ENCODE measurements at regions of chr14 and their contacts with region 1.

Region 1: DNA sequence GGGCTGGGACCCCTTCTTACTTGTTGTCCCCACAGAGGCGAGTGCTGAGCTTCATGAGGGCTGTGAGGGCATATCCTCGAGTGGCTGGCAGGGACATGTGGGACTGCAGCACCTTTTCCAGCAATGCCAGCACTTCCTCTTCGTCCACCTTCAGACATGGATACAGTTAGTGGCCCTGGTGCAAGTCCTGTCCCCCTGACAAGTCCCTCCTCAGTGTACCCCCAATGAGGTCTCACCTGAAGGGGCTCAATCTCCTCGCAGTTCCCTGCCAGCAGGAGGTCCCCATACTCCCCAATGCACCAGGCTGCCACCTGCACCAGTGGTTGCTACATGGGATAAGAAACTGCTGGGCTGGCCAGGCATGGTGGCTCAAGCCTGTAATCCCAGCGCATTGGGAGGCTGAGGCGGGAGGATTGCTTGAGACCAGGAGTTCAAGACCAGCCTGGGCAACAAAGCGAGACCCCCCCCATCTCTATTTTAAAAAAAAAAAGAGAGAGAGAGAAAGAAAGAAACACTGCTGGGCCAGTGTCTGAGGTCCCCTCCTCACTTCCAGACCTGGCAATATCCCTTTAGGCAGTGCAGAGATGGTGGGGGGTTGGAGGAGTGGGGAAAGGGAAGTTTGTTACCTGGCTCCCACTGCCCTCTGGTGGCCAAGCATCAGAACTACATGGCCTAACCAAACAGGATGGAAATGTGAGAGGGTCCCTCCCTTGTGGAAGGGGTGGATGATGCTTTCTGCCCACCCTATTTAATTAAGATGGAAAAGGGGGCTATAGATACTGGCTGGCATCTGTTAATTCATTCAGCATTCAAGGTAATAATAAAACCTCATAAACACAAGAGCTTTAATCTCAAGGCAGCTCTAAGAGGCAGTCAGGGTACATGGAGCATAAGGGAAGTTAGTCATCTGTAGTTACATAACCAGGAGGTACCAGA is 5.1 kb downstream of the AP1G2 start:
- DNase-seq: peak; percentile 67 to 72
- H3K4me3 ChIP-seq: no peak overlapping the region
- H3K4me3 Mint-ChIP-seq: no peak overlapping the region
- H3K27ac Mint-ChIP-seq: no peak overlapping the region
- H3K4me1 ChIP-seq: no peaks in the 10 kb centered on the region
- H3K4me1 Mint-ChIP-seq: peaks cover 4% of the 10 kb centered on the region
- H3K27me3 ChIP-seq: no peaks in the 10 kb centered on the region
- H3K27me3 Mint-ChIP-seq: no peaks in the 10 kb centered on the region
- CTCF ChIP-seq: peak; percentile 89 to 91

Region 2: DNA sequence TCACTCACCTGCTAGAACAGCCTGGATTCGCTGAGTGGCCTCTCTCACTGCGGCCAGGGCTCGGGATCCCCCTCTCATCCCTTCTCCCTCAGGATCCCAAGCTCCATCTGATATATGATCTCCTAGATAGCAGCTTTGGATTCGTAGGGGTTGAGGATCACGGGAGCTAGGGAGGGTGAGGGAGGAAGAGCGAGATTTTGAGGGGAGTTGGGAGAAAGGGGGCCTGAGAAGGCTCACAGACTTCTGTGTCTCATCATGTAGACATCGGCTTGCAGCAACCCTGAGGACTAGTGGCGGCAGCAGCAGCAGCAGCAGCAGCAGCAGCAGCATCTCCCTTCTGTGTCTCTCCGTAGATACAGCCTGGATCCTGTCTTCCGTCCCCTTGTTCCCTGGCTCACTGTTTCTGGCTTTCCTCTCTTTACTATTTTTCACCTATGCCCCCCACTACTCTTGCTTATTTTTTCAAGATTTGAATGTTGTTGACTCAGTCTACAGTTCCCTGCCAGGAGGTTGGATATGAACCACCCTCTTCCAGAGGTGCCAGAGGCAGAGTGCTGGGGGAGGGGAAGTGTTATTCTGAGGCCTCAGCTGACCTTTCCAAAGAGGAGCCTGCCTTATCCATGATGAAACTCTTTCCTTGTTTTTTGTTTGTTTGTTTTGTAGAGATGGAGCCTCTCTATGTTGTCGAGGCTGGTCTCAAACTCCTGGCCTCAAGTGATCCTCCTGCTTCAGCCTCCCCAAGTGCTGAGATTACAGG is 457.8 kb before region 1 on chr14 and contains the start of gene CIROP:
- CTCF ChIA-PET with region 1: interaction called, 10 read pairs
- POLR2A ChIA-PET with region 1: no interaction called
- intact Hi-C with region 1: no loop called
- DNase-seq: no peak
- H3K4me3 ChIP-seq: no peak within 1 kb of the TSS
- H3K4me3 Mint-ChIP-seq: no peak within 1 kb of the TSS
- H3K27ac Mint-ChIP-seq: no peak within 1 kb of the TSS
- H3K4me1 ChIP-seq: peaks cover 6% of the 10 kb centered on the region; the same call in 1 of the 2 replicates
- H3K4me1 Mint-ChIP-seq: peaks cover 15% of the 10 kb centered on the region
- H3K27me3 ChIP-seq: no peaks in the 10 kb centered on the region
- H3K27me3 Mint-ChIP-seq: no peaks in the 10 kb centered on the region
- CTCF ChIP-seq: no peak
- total RNA-seq, gene CIROP: not detected in 2 replicates

Region 3: DNA sequence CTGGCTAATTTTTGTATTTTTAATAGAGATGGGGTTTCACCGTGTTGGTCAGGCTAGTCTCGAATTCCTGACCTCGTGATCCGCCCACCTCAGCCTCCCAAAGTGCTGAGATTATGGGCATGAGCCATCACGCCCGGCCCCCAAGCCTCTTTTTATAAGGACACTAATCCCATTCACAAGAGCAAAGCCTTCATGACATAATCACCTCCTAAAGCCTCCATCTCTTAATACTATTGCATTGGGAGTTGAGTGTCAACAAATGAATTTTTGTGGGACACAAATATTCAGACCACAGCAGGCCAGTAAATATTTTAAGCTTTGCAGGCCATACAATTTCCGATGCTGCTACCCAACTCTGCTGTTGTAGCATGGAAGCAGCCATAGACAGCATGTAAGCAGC is 313.9 kb before region 1 on chr14:
- CTCF ChIA-PET with region 1: interaction called, 12 read pairs
- POLR2A ChIA-PET with region 1: no interaction called
- intact Hi-C with region 1: no loop called
- DNase-seq: no peak
- H3K4me3 ChIP-seq: no peak overlapping the region
- H3K4me3 Mint-ChIP-seq: no peak overlapping the region
- H3K27ac Mint-ChIP-seq: no peak overlapping the region
- H3K4me1 ChIP-seq: peaks cover 16% of the 10 kb centered on the region
- H3K4me1 Mint-ChIP-seq: peaks cover 27% of the 10 kb centered on the region
- H3K27me3 ChIP-seq: no peaks in the 10 kb centered on the region
- H3K27me3 Mint-ChIP-seq: no peaks in the 10 kb centered on the region
- CTCF ChIP-seq: no peak

Region 4: DNA sequence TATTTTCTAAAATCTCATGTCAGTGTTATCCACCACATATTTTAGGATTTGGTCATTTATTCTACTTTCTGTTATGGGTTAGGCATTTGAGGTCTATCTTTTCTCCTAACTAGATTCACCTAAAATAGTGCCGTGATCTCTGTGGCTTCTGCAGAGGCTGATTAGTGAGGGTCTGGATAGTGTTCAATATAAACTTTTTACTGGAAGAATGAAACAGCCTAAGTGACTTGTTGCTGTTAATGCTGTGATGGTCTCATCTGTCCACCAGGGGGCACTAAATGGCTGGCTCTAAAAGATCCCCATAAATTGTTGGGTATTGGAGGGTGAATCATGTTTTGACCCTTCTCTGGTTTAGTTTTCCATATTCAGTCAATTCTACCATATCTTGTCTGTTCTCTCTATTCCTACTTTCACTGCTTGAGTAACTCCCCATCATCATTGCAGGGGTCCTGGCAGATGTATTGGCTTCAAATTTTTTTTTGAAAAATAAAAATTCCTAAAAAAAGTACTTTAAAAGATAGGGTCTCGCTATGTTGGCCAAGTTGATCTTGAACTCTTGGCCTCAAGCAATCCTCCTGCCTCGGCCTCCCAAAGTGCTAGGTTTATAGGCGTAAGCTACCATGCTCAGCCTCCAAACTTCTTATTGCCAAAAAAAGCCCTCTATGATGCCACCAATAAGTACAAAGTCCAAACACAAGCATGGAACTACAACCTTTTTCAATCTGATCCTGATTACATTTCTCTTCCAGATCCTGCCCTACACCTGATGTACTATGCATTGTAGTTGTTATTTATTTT is 234.4 kb before region 1 on chr14:
- CTCF ChIA-PET with region 1: no interaction called
- POLR2A ChIA-PET with region 1: no interaction called
- intact Hi-C with region 1: loop called (anchors 1 kb)
- DNase-seq: peak; percentile 65 to 69
- H3K4me3 ChIP-seq: no peak overlapping the region
- H3K4me3 Mint-ChIP-seq: no peak overlapping the region
- H3K27ac Mint-ChIP-seq: no peak overlapping the region
- H3K4me1 ChIP-seq: no peaks in the 10 kb centered on the region
- H3K4me1 Mint-ChIP-seq: peaks cover 1% of the 10 kb centered on the region
- H3K27me3 ChIP-seq: no peaks in the 10 kb centered on the region
- H3K27me3 Mint-ChIP-seq: no peaks in the 10 kb centered on the region
- CTCF ChIP-seq: peak; percentile 73 to 74

Region 5: GRCh38 chr14:23478111-23478759 is 84.3 kb before region 1 on chr14:
- CTCF ChIA-PET with region 1: interaction called, 50 read pairs
- POLR2A ChIA-PET with region 1: no interaction called
- intact Hi-C with region 1: loop called (anchors 1 kb)
- DNase-seq: peak in 1 of 2 experiments; percentile 71
- H3K4me3 ChIP-seq: no peak overlapping the region
- H3K4me3 Mint-ChIP-seq: no peak overlapping the region
- H3K27ac Mint-ChIP-seq: no peak overlapping the region
- H3K4me1 ChIP-seq: no peaks in the 10 kb centered on the region
- H3K4me1 Mint-ChIP-seq: no peaks in the 10 kb centered on the region
- H3K27me3 ChIP-seq: no peaks in the 10 kb centered on the region
- H3K27me3 Mint-ChIP-seq: no peaks in the 10 kb centered on the region
- CTCF ChIP-seq: peak; percentile 72 to 77

Region 6: GRCh38 chr14:23483236-23483854 is 79.2 kb before region 1 on chr14:
- CTCF ChIA-PET with region 1: interaction called, 50 read pairs
- POLR2A ChIA-PET with region 1: no interaction called
- intact Hi-C with region 1: loop called (anchors 1 kb)
- DNase-seq: peak in 1 of 2 experiments; percentile 58
- H3K4me3 ChIP-seq: no peak overlapping the region
- H3K4me3 Mint-ChIP-seq: no peak overlapping the region
- H3K27ac Mint-ChIP-seq: no peak overlapping the region
- H3K4me1 ChIP-seq: no peaks in the 10 kb centered on the region
- H3K4me1 Mint-ChIP-seq: no peaks in the 10 kb centered on the region
- H3K27me3 ChIP-seq: no peaks in the 10 kb centered on the region
- H3K27me3 Mint-ChIP-seq: no peaks in the 10 kb centered on the region
- CTCF ChIP-seq: peak; percentile 60 to 74

Region 7: DNA sequence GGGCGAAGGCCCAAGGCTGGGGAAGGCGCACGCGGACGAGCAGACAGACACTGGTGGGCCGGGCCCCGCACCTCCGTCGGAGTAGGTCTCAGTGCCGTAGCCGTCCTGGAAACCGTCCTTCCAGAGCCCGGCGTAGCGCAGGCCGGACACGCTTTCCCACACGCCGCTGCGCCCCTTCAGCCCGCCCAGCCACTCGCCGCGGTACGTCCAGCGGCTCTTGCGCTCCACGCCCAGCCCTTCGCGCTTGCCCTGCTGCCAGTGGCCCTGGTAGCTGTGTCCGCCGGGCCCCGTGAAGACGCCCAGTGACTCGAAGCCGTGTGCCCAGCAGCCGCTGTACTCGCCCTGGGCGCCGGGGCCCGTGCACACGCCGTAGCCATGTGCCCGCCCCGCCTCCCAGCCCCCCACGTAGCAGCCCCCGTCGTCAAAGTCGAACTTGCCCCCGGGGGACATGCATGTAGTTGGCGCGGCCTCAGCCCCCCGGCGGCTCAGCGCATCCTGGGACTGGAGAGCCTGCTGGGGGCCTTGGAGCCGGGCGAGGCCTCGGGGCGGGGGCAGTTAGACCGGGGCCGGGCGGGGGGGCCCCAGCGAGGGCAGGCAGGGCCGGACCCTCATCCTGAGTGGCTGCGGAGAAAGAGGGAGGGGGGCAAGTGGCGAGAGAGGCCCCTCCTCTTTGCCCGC is 14.6 kb after region 1 on chr14:
- CTCF ChIA-PET with region 1: no interaction called
- POLR2A ChIA-PET with region 1: no interaction called
- intact Hi-C with region 1: no loop called
- DNase-seq: no peak
- H3K4me3 ChIP-seq: no peak overlapping the region
- H3K4me3 Mint-ChIP-seq: no peak overlapping the region
- H3K27ac Mint-ChIP-seq: no peak overlapping the region
- H3K4me1 ChIP-seq: no peaks in the 10 kb centered on the region
- H3K4me1 Mint-ChIP-seq: no peaks in the 10 kb centered on the region
- H3K27me3 ChIP-seq: no peaks in the 10 kb centered on the region
- H3K27me3 Mint-ChIP-seq: peaks cover 11% of the 10 kb centered on the region
- CTCF ChIP-seq: no peak

Region 8: DNA sequence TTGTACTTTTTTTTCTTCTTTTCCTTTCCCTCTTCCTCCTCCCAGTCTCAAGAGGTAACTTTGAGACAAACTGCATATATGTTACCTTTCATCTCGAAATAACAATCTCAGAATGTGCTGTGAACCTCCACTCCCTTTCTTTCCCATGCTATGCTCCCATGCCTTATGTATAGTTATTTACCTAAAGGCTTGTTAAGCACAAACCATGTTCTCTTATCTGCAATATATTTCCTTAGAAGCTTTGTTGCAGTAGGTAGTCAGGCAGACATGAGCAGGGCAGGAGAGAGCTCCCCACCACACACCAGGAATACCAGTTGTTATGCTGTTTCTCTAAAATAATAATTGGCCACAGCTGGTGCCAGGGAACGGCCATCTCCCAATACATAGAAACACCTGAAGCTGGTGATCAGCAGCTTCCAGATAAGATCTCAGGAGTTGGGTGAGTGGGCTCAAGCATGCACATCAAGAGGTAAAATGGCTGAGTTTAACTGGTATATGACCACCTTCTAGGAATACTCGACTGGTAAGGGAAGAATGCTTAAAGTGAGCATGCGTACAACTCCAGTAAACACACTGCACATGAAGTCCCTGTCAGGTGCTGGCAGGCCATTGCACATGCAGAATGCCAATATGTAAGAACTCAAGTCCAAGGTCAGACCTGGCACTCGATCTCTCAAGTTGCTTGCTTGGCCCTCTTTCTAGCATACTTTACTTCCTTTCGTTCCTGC is 58.8 kb after region 1 on chr14:
- CTCF ChIA-PET with region 1: no interaction called
- POLR2A ChIA-PET with region 1: no interaction called
- intact Hi-C with region 1: no loop called
- DNase-seq: no peak
- H3K4me3 ChIP-seq: no peak overlapping the region
- H3K4me3 Mint-ChIP-seq: no peak overlapping the region
- H3K27ac Mint-ChIP-seq: no peak overlapping the region
- H3K4me1 ChIP-seq: no peaks in the 10 kb centered on the region
- H3K4me1 Mint-ChIP-seq: no peaks in the 10 kb centered on the region
- H3K27me3 ChIP-seq: no peaks in the 10 kb centered on the region
- H3K27me3 Mint-ChIP-seq: no peaks in the 10 kb centered on the region
- CTCF ChIP-seq: no peak